MCF 10A (cell line): ENCODE measurements at regions of chr17 and their contacts with region 1.

Region 1: DNA sequence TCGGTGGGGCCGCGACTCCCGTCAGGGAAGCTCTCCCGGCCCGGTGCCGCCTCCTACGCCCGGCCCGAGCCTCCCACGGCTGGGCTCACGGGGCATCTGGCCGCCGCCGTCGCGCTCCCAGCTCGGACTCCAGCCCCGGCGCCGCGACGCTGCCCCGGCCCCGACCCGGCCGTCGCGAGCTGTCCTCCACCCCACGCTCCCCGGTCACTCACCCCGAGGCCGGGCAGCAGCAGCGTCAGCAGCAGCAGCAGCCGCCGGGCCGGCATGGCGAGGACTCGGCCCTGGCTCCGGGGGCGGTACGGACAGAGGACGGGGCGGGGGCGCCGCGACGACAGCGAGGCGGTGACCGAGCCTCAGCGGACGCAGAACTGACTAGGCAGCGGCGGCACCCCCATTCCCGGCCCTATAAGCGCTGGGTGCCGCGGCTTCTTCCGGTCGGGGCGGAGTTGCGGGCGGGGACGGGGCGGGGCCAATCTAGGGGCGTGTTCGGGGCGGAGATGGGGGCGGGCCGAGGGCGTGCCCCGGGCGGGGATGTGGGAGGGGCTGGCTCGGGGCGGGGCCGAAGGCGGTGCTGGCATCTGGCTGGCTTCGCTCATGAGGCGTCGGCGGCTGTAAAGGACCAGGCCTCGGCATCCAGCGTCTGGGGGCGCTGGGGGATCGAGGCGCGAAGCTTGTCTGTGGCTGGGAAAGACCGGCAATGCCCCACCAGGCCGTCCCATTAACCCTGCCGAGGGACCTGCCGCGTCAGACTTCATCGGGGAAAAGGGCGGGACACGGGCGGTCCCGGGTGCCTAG is at the start of gene ERN1:
- DNase-seq: peak; percentile 93
- H3K4me3 Mint-ChIP-seq: peak within 1 kb of the TSS; percentile 94
- H3K27ac Mint-ChIP-seq: peak within 1 kb of the TSS; percentile 93
- H3K4me1 Mint-ChIP-seq: peaks cover 18% of the 10 kb centered on the region
- H3K27me3 Mint-ChIP-seq: no peaks in the 10 kb centered on the region
- CTCF ChIP-seq: no peak
- total RNA-seq, gene ERN1: 79.5 and 87.0 TPM in 2 replicates

Region 2: DNA sequence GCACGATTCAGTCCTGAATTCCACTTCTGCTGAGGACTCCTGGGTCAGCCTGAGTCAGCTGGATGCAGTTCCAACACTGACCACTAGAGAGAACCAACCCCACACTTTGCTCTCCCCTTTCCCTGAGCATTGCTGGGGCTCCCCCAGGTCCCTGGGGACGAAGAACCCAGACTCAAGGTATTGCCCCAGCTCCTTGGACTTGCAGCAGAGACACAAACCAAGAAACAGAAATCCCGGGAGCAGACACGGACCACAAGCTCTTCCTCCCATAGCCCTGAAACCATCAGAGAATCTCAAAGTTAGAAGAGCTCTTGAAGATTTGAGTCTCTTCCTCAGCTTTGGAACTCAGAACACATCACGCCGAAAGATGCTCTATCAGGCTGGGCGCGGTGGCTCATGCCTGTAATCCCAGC is 210.6 kb before region 1 on chr17:
- CTCF ChIA-PET with region 1: interaction called, 63 read pairs
- POLR2A ChIA-PET with region 1: interaction called, 4 read pairs
- intact Hi-C with region 1: no loop called
- DNase-seq: peak; percentile 64
- H3K4me3 Mint-ChIP-seq: no peak overlapping the region
- H3K27ac Mint-ChIP-seq: no peak overlapping the region
- H3K4me1 Mint-ChIP-seq: peaks cover 5% of the 10 kb centered on the region
- H3K27me3 Mint-ChIP-seq: peaks cover 13% of the 10 kb centered on the region
- CTCF ChIP-seq: peak; percentile 90

Region 3: DNA sequence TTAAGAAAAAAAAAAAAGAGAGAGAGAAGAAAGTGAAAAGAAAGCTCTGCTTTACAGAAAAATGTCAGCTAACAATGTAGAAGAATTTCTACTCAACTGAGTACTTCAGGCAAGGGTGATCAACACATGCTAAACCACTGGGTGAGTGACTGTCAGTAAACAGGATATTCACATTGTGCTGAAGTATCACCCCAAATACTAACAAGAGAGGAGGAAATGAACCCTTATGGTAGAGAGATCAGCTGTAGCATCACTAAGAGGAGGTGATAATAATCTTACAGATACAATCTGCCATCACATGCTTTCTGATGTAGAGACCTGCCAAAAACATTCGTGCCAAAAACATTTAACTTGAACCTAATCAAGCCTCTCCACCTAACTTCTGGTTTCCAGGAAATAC is 78.8 kb before region 1 on chr17:
- CTCF ChIA-PET with region 1: interaction called, 27 read pairs
- POLR2A ChIA-PET with region 1: interaction called, 4 read pairs
- intact Hi-C with region 1: no loop called
- DNase-seq: no peak
- H3K4me3 Mint-ChIP-seq: no peak overlapping the region
- H3K27ac Mint-ChIP-seq: no peak overlapping the region
- H3K4me1 Mint-ChIP-seq: no peaks in the 10 kb centered on the region
- H3K27me3 Mint-ChIP-seq: no peaks in the 10 kb centered on the region
- CTCF ChIP-seq: no peak

Region 4: GRCh38 chr17:64081802-64082799 is 47.9 kb before region 1 on chr17:
- CTCF ChIA-PET with region 1: interaction called, 12 read pairs
- POLR2A ChIA-PET with region 1: interaction called, 37 read pairs
- intact Hi-C with region 1: loop called (anchors 1 kb)
- DNase-seq: peak; percentile 87
- H3K4me3 Mint-ChIP-seq: peak overlapping the region; percentile 19
- H3K27ac Mint-ChIP-seq: no peak overlapping the region
- H3K4me1 Mint-ChIP-seq: peaks cover 19% of the 10 kb centered on the region
- H3K27me3 Mint-ChIP-seq: no peaks in the 10 kb centered on the region
- CTCF ChIP-seq: no peak

Region 5: GRCh38 chr17:64145757-64146417 is 15.9 kb after region 1 on chr17:
- CTCF ChIA-PET with region 1: interaction called, 5 read pairs
- POLR2A ChIA-PET with region 1: interaction called, 65 read pairs
- intact Hi-C with region 1: no loop called
- DNase-seq: peak; percentile 99
- H3K4me3 Mint-ChIP-seq: no peak overlapping the region
- H3K27ac Mint-ChIP-seq: no peak overlapping the region
- H3K4me1 Mint-ChIP-seq: peaks cover 23% of the 10 kb centered on the region
- H3K27me3 Mint-ChIP-seq: no peaks in the 10 kb centered on the region
- CTCF ChIP-seq: no peak